ENCODE measurements at regions of chr16 and their contacts with region 1.

Region 1: GRCh38 chr16:22001591-22001990 is 675 bp upstream of the PDZD9 start:
- DNase-seq: no peak
- H3K4me3 ChIP-seq: no peak overlapping the region
- H3K27ac ChIP-seq: no peak overlapping the region
- H3K4me1 ChIP-seq: peaks cover 19% of the 10 kb centered on the region
- H3K27me3 ChIP-seq: no peaks in the 10 kb centered on the region
- CTCF ChIP-seq: no peak
- POLR2A ChIP-seq: no peak

Region 2: DNA sequence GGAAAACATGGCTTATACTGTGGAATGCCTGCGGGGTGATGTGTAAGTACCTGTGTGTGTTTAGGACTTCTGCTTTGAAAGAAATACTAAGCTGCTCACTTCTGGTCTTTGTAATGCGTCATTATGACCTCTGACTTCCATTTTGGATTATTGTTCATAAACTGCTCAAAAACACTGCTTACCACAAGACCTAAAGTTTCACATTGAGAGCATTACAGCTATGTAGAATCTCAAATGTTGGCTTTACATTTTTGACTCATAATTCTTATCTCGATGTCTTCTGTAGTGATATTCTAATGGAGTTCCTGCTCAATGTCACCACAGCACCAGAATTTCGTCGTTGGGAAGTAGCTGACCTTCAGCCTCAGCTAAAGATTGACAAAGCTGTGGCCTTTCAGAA is 39.1 kb before region 1 on chr16:
- CTCF ChIA-PET with region 1: no interaction called
- POLR2A ChIA-PET with region 1: no interaction called
- dilution Hi-C with region 1: no loop called
- intact Hi-C with region 1: no loop called
- DNase-seq: no peak
- H3K4me3 ChIP-seq: no peak overlapping the region
- H3K27ac ChIP-seq: no peak overlapping the region
- H3K4me1 ChIP-seq: no peaks in the 10 kb centered on the region
- H3K27me3 ChIP-seq: no peaks in the 10 kb centered on the region
- CTCF ChIP-seq: no peak
- POLR2A ChIP-seq: no peak

Region 3: DNA sequence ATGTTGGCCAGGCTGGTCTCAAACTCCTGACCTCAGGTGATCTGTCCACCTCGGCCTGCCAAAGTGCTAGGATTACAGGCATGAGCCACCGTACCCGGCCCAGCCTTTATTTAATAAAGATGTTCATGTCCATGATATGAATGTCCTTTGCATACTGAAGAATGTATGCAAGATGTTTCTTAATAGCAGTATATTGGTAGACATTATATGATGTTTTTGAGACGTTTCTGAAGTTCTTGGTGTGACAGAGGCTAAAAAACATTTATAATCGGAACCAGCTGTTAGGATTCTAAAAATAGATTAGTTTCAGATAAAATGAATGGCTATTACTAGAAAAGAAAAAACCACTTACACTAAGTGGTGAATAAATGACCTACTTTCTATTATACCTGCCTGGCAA is 12.5 kb before region 1 on chr16:
- CTCF ChIA-PET with region 1: interaction called, 20 read pairs
- POLR2A ChIA-PET with region 1: no interaction called
- dilution Hi-C with region 1: no loop called
- intact Hi-C with region 1: no loop called
- DNase-seq: no peak
- H3K4me3 ChIP-seq: no peak overlapping the region
- H3K27ac ChIP-seq: no peak overlapping the region
- H3K4me1 ChIP-seq: no peaks in the 10 kb centered on the region
- H3K27me3 ChIP-seq: no peaks in the 10 kb centered on the region
- CTCF ChIP-seq: no peak
- POLR2A ChIP-seq: no peak

Region 4: GRCh38 chr16:22023505-22023904 is 21.9 kb after region 1 on chr16:
- CTCF ChIA-PET with region 1: interaction called, 4 read pairs
- POLR2A ChIA-PET with region 1: no interaction called
- dilution Hi-C with region 1: no loop called
- intact Hi-C with region 1: loop called (anchors 1 kb)
- DNase-seq: no peak
- H3K4me3 ChIP-seq: no peak overlapping the region
- H3K27ac ChIP-seq: no peak overlapping the region
- H3K4me1 ChIP-seq: peaks cover 59% of the 10 kb centered on the region
- H3K27me3 ChIP-seq: no peaks in the 10 kb centered on the region
- CTCF ChIP-seq: no peak
- POLR2A ChIP-seq: no peak

Region 5: DNA sequence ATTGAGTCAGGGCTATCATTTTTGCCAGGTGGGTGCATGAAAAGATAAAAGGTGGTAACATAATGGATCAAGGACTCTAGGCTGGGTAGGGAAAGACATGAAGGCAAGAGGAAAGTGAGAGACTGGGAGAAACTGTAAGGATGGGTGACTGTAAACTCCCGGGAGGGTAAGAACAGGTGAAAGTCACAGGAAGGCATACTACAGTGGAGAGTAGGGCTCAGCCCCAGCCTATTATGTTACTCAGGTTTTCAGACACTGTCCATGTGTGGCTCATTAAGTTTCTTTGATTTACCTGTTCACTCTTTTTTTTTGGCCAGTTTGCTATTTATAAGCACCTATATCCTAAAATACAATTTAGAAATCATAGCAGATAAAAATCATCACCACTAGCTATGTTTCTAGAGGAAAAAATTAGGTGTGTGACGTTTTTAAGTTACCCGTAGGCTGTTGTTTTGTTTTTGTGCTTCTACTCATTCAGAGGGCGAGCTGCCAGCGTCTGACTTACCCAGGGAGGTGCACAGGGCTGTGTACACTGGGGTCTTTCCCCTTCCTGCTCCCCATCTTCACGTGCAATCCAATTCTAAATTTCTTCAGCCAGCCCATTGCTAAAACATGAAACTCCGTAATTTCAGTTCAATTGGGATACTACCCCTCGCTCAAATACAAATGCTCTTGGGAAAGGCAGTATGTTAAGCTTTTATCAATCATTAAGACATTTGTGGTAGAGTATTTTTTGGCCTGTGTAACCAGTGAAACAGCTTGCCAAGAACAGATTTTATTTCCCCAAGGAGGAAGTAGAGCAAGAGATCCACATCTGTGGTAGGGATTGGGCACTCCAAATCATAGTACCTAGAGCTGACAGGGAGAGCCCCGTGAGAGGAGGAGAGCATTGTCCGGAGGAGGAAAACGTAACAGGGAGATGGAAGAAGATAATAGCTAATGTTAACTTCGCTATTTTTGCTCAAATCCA is 69.1 kb after region 1 on chr16:
- CTCF ChIA-PET with region 1: interaction called, 994 read pairs
- POLR2A ChIA-PET with region 1: no interaction called
- dilution Hi-C with region 1: no loop called
- intact Hi-C with region 1: no loop called
- DNase-seq: peak; percentile 57
- H3K4me3 ChIP-seq: no peak overlapping the region
- H3K27ac ChIP-seq: peak overlapping the region; percentile 43
- H3K4me1 ChIP-seq: peaks cover 46% of the 10 kb centered on the region
- H3K27me3 ChIP-seq: no peaks in the 10 kb centered on the region
- CTCF ChIP-seq: no peak
- POLR2A ChIP-seq: no peak

Region 6: GRCh38 chr16:22302776-22303363 is 301.3 kb after region 1 on chr16:
- CTCF ChIA-PET with region 1: no interaction called
- POLR2A ChIA-PET with region 1: no interaction called
- dilution Hi-C with region 1: no loop called
- intact Hi-C with region 1: no loop called
- DNase-seq: no peak
- H3K4me3 ChIP-seq: no peak overlapping the region
- H3K27ac ChIP-seq: no peak overlapping the region
- H3K4me1 ChIP-seq: no peaks in the 10 kb centered on the region
- H3K27me3 ChIP-seq: no peaks in the 10 kb centered on the region
- CTCF ChIP-seq: no peak
- POLR2A ChIP-seq: no peak